ENCODE measurements at regions of chr6 and their contacts with region 1.

Region 1: GRCh38 chr6:17808609-17809008 is 101.9 kb upstream of the NUP153 start:
- DNase-seq: no peak
- H3K4me3 ChIP-seq: no peak overlapping the region
- H3K27ac ChIP-seq: no peak overlapping the region
- H3K4me1 ChIP-seq: no peaks in the 10 kb centered on the region
- H3K27me3 ChIP-seq: no peaks in the 10 kb centered on the region
- CTCF ChIP-seq: no peak
- POLR2A ChIP-seq: no peak

Region 2: DNA sequence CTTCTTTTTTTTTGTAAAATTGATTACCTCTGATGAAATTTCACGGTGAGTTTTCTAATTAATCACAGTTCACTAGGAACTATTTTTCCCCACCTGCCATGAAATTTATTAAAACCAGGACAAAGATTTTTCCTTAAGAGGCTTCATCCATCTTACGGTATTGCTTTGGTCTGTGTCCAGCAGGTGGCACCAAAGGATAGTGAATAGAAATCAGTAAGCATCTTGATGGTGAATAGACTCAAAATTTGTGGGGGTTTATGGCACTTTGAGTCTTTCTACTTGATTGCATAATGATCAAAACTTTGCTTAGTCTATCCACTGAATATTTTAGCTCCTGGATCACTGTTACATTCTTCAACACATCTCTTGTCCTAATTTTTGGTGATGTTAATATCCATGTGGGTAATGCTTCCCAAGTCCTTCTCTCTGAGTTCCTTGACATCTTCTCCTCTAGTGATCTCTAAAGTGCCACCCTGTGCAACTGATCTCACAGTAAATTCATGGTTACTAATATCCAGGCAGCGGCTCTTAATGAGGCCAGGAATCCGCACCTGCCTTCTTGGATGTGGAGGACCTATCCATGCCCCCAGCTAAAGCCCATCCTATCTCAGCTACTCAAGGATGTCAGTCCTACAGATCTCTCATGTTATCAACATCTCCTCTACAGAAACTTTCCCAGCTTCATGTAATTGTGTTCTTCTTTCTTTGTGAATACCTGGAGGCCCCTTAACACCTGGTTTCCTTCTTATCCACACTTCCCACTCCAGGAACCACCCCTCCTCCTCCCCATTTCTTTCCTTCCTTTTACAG is 652.3 kb before region 1 on chr6:
- intact Hi-C with region 1: loop called (anchors 10 kb)
- DNase-seq: no peak
- H3K4me3 ChIP-seq: no peak overlapping the region
- H3K27ac ChIP-seq: no peak overlapping the region
- H3K4me1 ChIP-seq: no peaks in the 10 kb centered on the region
- H3K27me3 ChIP-seq: no peaks in the 10 kb centered on the region
- CTCF ChIP-seq: peak; percentile 63 to 93 (median 85)
- POLR2A ChIP-seq: no peak

Region 3: DNA sequence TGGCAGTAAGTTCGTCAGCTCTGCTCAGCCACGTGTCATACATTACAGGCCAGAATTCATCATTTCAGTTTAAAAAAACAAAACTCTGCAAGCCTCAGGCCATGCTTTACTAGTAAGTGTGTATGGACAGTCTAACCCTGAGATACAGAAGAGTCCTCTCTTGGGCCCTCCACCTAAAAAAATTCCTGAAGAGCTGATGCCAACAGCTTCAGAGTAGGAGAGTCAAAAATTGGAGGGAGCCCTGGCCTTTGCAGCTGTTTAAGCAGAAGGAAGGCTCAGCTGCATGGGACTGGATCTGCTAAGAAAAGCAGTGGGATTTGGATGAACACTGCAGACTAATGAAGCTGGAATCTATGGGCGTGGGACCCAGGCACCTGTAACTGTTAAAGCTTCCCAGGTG is 255.7 kb before region 1 on chr6:
- intact Hi-C with region 1: no loop called
- DNase-seq: no peak
- H3K4me3 ChIP-seq: no peak overlapping the region
- H3K27ac ChIP-seq: no peak overlapping the region
- H3K4me1 ChIP-seq: no peaks in the 10 kb centered on the region
- H3K27me3 ChIP-seq: no peaks in the 10 kb centered on the region
- CTCF ChIP-seq: no peak
- POLR2A ChIP-seq: no peak

Region 4: DNA sequence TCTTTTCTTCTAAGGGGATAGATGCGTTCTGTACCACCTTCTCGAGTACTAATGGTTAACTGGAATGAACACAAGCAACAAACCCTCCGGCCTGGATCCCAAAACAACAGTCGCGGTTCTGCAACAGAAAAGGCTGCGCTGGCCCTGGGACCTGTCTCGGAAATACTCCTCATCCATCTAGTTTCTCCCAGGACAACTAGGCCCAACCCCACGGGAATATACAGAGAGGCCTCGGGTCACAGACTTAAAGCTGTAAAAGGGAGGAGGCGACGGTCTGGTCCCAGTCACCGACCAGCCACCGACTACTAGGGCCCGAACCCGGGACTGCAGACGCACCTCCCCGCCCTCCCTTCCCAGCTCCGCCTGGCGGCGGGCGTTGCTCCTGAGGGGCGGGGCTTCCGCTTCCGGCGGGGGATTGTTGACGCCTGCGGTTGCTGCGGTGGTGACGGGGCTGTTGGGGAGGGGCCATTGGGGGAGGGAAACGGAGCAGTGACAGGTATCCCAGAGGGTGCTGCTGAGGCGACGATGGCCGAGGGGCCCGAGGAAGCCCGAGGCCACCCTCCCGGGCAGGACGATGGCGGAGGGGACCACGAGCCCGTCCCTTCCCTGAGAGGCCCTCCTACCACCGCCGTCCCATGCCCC is 208.6 kb before region 1 on chr6 and contains the start of gene FAM8A1:
- intact Hi-C with region 1: loop called (anchors 10 kb)
- DNase-seq: peak; percentile 92 to 98
- H3K4me3 ChIP-seq: peak within 1 kb of the TSS; percentile 81 to 94
- H3K27ac ChIP-seq: peak within 1 kb of the TSS; percentile 98
- H3K4me1 ChIP-seq: peaks cover 35% of the 10 kb centered on the region
- H3K27me3 ChIP-seq: no peaks in the 10 kb centered on the region
- CTCF ChIP-seq: peak in 2 of 3 experiments; percentile 36 to 63
- POLR2A ChIP-seq: peak in 1 of 2 donors; percentile 66
- total RNA-seq, gene FAM8A1: 28.7 TPM